Naive thymus-derived CD8-positive, alpha-beta T cell (primary cell): ENCODE measurements at regions of chr7 and their contacts with region 1.

Region 1: DNA sequence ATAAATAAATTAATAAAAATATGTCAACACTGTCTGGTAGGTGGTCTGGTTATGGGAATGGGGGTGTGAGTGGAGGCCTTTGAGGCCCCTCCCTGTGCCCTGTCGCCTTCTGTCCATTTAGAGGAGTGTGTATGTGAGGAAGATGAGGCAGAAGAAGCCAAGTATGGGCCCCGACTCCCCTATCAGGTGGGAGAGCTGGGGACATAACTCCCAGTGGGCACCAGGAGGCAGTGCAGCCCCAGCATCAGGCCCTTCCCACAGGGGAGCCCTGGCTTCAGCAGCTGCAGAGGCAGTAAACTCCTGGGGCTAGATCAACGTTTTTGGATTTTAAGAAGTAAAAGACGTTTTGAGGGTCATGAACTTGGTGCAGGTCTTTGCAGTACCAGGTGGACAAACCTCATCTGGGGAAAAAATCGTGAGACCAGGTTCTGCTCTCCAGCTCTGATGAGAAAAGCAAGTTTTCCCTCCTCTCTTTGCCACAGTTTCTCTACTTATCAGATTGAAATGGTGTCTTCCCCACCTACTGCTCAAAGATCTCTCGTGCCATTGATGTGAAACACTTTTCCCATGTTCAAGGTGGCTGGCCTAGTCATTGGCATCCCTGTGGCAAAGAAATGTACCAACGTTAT is 167.8 kb upstream of the EEPD1 start:
- DNase-seq: peak; percentile 60 to 89 (median 74)
- ATAC-seq: peak; percentile 100
- H3K4me3 Mint-ChIP-seq: no peak overlapping the region
- H3K27ac Mint-ChIP-seq: no peak overlapping the region
- H3K4me1 Mint-ChIP-seq: no peaks in the 10 kb centered on the region
- H3K27me3 Mint-ChIP-seq: peaks cover 0 to 2% (median 0%) of the 10 kb centered on the region in 5 donors

Region 2: DNA sequence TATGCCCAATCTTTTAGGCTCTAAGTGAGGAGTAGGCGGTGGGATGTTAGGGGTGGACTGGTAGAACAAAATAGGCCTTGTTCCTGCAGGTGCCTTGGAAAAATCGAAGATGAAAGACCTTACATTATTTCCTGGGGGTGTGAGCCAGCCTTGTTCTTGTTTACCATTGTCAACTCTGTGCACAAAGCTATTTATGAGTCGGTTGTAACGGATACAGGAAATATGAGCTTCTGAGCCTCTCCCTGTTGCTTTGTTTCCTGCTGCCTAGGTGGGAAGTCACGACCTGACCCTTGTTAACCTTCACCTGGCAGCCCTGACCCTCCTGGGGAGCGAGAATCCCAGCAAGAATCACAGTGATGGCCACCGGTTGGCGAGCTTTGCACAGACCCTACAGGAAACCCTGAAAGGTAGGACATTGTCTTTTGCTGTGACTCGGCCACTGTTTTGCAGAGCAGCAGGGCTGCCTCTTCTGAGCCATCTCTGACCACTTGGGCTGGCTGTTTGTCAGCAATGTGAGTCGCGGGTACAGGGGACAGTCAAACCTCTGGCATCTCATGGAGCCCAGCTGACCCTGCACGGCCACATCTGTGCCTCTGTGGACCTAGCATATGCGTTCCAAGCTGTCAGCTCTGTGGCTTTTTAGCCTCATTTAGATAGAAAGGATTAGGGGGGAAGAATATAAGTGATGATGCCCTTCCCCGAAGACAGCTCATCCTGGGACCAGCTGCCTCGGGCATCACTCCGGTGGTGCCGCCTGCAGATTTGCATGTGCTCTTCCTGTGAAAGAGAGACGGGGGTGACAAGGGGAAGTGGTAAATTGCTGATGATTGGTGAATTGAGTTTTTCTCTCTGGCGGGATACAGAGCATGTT is 302.4 kb after region 1 on chr7:
- POLR2A ChIA-PET with region 1: interaction called, 14 read pairs
- DNase-seq: peak in 5 of 10 donors; percentile 7 to 56 (median 42)
- ATAC-seq: peak; percentile 21 to 32
- H3K4me3 Mint-ChIP-seq: peak overlapping the region; percentile 69 to 88 (median 84)
- H3K27ac Mint-ChIP-seq: peak overlapping the region; percentile 86 to 100 (median 94)
- H3K4me1 Mint-ChIP-seq: peaks cover 41 to 82% (median 73%) of the 10 kb centered on the region in 4 donors
- H3K27me3 Mint-ChIP-seq: peaks cover 0 to 3% (median 0%) of the 10 kb centered on the region in 5 donors